ENCODE measurements at regions of chr19 and their contacts with region 1.

Region 1: DNA sequence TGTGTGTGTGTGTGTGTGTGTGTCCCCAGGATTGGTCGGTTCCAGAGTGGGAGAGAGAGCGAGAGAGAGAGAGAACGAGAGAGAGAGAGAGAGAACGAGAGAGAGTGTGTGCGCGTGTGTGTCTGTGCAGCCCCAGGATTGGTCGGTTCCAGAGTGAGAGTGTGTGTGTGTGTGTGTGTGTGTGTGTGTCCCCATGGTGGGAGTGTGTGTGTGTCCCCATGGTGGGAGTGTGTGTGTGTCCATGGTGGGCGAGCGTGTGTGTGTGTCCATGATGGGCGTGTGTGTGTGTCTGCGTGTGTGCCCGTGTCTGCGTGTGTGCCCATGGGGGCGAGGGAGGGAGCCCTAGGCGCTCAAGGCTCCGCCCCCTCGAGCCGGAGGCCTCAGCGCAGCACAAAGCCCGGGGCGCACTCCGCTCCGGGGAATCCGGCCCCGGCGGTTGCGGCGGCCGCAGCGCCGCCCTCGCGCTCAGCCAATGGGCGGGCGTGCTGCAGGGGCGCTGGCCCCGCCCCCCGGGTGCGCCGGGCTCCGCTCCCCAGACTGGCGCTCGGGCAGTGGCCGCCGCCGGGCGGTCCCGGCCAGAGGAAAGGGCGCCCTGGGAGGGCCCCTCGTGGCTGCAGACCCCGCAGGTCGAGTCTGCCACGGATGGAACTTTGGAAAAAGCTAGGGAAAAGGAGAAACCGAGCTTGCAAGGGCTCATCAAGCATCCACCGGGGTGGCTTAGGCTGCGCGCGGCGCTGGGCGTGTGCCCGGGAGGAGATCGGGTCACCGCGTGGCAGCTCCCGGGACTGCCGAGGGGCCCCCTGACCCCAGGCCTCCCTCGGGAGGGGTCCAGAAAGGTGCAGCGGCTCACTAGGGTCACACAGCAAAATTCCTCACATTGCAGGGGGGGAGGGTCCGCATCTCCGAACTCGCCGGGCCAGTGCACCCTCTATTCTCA is 96.2 kb downstream of the INSR start:
- DNase-seq: peak; percentile 74 to 98 (median 88)
- ATAC-seq: peak; percentile 85
- H3K4me3 ChIP-seq: peak overlapping the region; percentile 65
- H3K4me3 Mint-ChIP-seq: peak overlapping the region; percentile 95
- H3K27ac ChIP-seq: peak overlapping the region; percentile 48 to 68
- H3K27ac Mint-ChIP-seq: peak overlapping the region; percentile 89
- H3K4me1 ChIP-seq: peaks cover 23% of the 10 kb centered on the region
- H3K4me1 Mint-ChIP-seq: peaks cover 12% of the 10 kb centered on the region
- H3K27me3 ChIP-seq: peaks cover 0 to 7% of the 10 kb centered on the region in 2 experiments
- H3K27me3 Mint-ChIP-seq: peaks cover 9% of the 10 kb centered on the region
- CTCF ChIP-seq: no peak

Region 2: DNA sequence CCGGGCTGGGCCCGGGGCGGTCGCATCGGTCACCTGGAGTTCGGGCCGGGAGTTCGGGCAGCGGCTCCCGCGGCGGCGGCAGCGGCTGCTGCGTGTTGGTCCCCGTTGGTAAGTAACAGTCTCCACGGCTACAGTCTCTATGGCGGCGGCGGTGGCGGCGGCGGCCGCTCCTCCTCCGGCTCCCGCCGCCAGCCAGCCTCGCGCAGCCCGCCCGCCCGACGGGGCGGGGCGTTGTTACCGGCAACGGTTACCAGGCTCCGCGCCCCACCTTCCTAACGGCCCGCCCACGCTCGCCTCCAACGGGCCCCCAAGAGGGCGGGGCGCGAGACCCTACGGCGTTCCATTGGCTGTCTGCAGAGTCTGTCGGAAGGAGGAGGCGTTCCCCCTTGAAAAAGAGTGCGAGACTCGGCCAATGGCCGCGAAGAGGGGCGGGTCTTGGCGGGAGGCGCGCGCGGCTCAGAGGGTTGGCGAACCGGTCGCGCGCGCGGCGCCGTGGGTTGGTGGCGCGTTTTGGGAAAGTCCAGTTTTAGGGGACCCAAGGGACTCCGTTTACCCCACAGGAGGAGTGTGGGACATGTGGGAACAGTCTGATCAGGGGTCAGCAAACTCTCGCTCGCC is 1087.6 kb before region 1 on chr19 and contains the start of gene RFX2:
- CTCF ChIA-PET with region 1: no interaction called
- POLR2A ChIA-PET with region 1: no interaction called
- intact Hi-C with region 1: loop called in 1 of 2 experiments (anchors 10 kb)
- DNase-seq: peak; percentile 98 to 100 (median 99)
- ATAC-seq: peak; percentile 96
- H3K4me3 ChIP-seq: peak within 1 kb of the TSS; percentile 65
- H3K4me3 Mint-ChIP-seq: peak within 1 kb of the TSS; percentile 89
- H3K27ac ChIP-seq: peak within 1 kb of the TSS; percentile 21 to 52
- H3K27ac Mint-ChIP-seq: peak within 1 kb of the TSS; percentile 74
- H3K4me1 ChIP-seq: peaks cover 27% of the 10 kb centered on the region
- H3K4me1 Mint-ChIP-seq: peaks cover 25% of the 10 kb centered on the region
- H3K27me3 ChIP-seq: peaks cover 2 to 4% of the 10 kb centered on the region in 2 experiments
- H3K27me3 Mint-ChIP-seq: peaks cover 15% of the 10 kb centered on the region
- CTCF ChIP-seq: no peak
- total RNA-seq, gene RFX2: 4.8 to 5.5 TPM

Region 3: GRCh38 chr19:7168941-7169340 is 29.1 kb before region 1 on chr19:
- CTCF ChIA-PET with region 1: interaction called, 3 read pairs
- POLR2A ChIA-PET with region 1: no interaction called
- intact Hi-C with region 1: loop called in 1 of 2 experiments (anchors 1 kb)
- DNase-seq: no peak
- ATAC-seq: no peak
- H3K4me3 ChIP-seq: no peak overlapping the region
- H3K4me3 Mint-ChIP-seq: no peak overlapping the region
- H3K27ac ChIP-seq: no peak overlapping the region
- H3K27ac Mint-ChIP-seq: no peak overlapping the region
- H3K4me1 ChIP-seq: no peaks in the 10 kb centered on the region
- H3K4me1 Mint-ChIP-seq: no peaks in the 10 kb centered on the region
- H3K27me3 ChIP-seq: no peaks in the 10 kb centered on the region
- H3K27me3 Mint-ChIP-seq: no peaks in the 10 kb centered on the region
- CTCF ChIP-seq: no peak

Region 4: DNA sequence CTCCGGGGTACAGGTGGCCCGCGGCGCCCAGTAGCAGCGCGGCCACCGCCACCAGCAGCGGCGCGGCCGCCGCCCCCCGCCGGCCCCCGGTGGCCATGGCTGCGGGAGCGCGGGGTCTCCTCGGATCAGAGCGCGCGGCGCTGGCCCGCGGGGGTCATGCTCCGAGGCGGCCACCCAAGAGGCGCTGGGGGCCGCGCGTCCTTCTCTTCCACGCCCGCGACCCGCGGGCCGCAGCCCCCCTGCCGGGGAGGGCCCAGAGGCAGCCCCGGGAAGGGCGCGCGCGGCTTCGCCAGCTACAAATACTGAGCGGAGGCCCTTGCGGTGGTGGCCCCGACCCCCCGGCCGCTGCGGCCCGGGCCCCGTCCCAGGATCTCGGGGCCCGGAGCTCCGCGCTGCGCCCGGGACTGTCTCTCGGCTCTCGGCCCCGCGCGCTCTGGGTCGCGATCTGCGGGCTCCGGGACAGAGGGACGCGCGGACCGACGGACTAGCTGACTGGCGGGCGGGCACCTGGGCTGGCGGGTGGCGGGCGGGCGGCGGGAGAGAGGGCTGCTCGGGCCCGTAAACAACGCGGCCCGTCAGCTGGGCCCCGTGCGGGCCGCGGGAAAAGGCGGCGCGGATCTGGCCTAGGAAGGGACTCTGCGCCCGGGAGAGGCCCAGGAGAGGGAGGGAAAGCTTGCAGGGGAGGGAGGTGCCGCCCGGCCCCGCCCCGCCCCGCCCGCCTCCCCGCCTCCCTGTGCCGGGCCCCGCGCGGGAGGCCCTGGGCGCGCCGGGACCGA is 96.0 kb after region 1 on chr19 and contains the start of gene INSR:
- CTCF ChIA-PET with region 1: interaction called, 3 read pairs
- POLR2A ChIA-PET with region 1: interaction called, 8 read pairs
- intact Hi-C with region 1: loop called in 1 of 2 experiments (anchors 1 kb)
- DNase-seq: peak in 11 of 14 experiments; percentile 5 to 70 (median 52)
- ATAC-seq: peak; percentile 85
- H3K4me3 ChIP-seq: peak within 1 kb of the TSS; percentile 42
- H3K4me3 Mint-ChIP-seq: peak within 1 kb of the TSS; percentile 86
- H3K27ac ChIP-seq: no peak within 1 kb of the TSS
- H3K27ac Mint-ChIP-seq: no peak within 1 kb of the TSS
- H3K4me1 ChIP-seq: peaks cover 16% of the 10 kb centered on the region
- H3K4me1 Mint-ChIP-seq: peaks cover 19% of the 10 kb centered on the region
- H3K27me3 ChIP-seq: peaks cover 18 to 30% of the 10 kb centered on the region in 2 experiments
- H3K27me3 Mint-ChIP-seq: peaks cover 45% of the 10 kb centered on the region
- CTCF ChIP-seq: no peak
- total RNA-seq, gene INSR: 1.8 to 3.0 TPM

Region 5: DNA sequence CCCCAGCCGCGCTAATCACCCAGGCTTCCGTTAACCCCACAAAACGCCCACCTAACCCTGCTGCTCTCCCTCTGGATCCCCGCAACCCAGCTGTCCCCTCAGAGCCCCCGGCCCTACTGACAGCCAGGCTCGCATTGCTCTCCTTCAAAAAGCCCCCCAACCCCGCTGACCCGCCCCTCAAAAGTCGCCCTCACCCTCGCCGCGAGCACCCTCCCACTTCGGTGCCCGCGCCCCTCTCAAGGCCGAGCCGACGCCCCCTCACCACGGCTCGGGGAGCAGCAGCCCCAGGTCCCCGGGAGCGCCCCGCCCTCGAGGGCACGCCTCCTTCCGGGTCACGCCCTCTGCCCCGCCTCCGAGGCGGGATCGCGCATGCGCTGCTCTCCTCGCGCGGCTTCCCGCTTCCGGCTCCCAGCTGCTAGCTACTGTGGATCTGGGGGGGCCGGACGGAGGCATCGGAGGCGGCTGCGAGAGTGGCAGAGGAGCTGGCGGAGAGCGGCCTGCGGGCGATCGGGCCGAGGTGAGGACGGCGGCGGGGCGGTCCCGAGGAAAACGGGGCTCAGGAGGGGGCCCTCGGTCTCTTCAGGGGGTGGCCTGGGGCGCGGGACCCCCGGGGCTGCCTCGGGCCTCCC is 196.8 kb after region 1 on chr19:
- CTCF ChIA-PET with region 1: no interaction called
- POLR2A ChIA-PET with region 1: no interaction called
- intact Hi-C with region 1: loop called in 1 of 2 experiments (anchors 2 kb)
- DNase-seq: peak; percentile 77 to 96 (median 87)
- ATAC-seq: peak; percentile 85
- H3K4me3 ChIP-seq: peak overlapping the region; percentile 66
- H3K4me3 Mint-ChIP-seq: peak overlapping the region; percentile 84
- H3K27ac ChIP-seq: peak overlapping the region; percentile 57 to 58
- H3K27ac Mint-ChIP-seq: peak overlapping the region; percentile 76
- H3K4me1 ChIP-seq: peaks cover 52% of the 10 kb centered on the region
- H3K4me1 Mint-ChIP-seq: peaks cover 57% of the 10 kb centered on the region
- H3K27me3 ChIP-seq: no peaks in the 10 kb centered on the region
- H3K27me3 Mint-ChIP-seq: no peaks in the 10 kb centered on the region
- CTCF ChIP-seq: no peak

Measured in CD4-positive, alpha-beta T cell (primary cell).